Mammary epithelial cell (primary cell): ENCODE measurements at regions of chr1 and their contacts with region 1.

Region 1: GRCh38 chr1:180611016-180611930 is 20.5 kb upstream of the XPR1 start:
- DNase-seq: peak; percentile 69
- H3K4me3 ChIP-seq: no peak overlapping the region
- H3K27ac ChIP-seq: peak overlapping the region; percentile 43
- H3K4me1 ChIP-seq: peaks cover 38% of the 10 kb centered on the region
- H3K27me3 ChIP-seq: no peaks in the 10 kb centered on the region
- CTCF ChIP-seq: no peak

Region 2: DNA sequence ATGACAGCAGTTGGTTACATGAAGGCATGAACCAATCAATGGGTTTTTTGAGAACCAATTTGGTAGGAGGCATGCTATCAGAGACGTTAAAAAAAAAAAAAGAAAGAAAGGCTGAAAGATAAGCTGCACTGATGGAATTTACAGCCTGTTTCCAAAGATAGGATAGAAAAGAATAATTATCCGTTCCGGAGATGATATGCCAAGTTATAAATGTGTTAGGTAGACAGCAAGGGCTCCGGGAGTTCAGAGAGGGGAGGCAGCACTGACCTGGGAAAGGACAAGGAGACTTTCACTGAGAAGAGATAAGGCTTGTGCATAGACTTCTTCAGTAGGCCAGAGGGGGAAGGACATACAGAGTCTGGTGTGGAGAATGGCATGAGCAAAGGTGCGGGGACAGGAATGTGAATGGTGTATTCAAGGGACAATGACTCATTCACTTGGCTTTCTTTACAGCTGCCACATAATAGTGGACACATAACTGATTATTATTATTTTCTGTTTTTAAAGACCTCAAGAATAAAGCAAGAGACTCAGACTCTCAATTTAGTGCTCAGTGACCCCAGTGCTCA is 84.1 kb before region 1 on chr1:
- CTCF ChIA-PET with region 1: no interaction called
- dilution Hi-C with region 1: loop called (anchors 5 kb)
- in situ Hi-C with region 1: no loop called
- intact Hi-C with region 1: no loop called
- DNase-seq: peak; percentile 66
- H3K4me3 ChIP-seq: no peak overlapping the region
- H3K27ac ChIP-seq: no peak overlapping the region
- H3K4me1 ChIP-seq: peaks cover 61% of the 10 kb centered on the region
- H3K27me3 ChIP-seq: no peaks in the 10 kb centered on the region
- CTCF ChIP-seq: no peak

Region 3: GRCh38 chr1:180586671-180587155 is 24.6 kb before region 1 on chr1:
- CTCF ChIA-PET with region 1: no interaction called
- dilution Hi-C with region 1: no loop called
- in situ Hi-C with region 1: no loop called
- intact Hi-C with region 1: loop called (anchors 2 kb)
- DNase-seq: peak; percentile 84
- H3K4me3 ChIP-seq: no peak overlapping the region
- H3K27ac ChIP-seq: peak overlapping the region; percentile 85
- H3K4me1 ChIP-seq: peaks cover 23% of the 10 kb centered on the region
- H3K27me3 ChIP-seq: no peaks in the 10 kb centered on the region
- CTCF ChIP-seq: no peak